ENCODE measurements at regions of chr3 and their contacts with region 1.

Region 1: DNA sequence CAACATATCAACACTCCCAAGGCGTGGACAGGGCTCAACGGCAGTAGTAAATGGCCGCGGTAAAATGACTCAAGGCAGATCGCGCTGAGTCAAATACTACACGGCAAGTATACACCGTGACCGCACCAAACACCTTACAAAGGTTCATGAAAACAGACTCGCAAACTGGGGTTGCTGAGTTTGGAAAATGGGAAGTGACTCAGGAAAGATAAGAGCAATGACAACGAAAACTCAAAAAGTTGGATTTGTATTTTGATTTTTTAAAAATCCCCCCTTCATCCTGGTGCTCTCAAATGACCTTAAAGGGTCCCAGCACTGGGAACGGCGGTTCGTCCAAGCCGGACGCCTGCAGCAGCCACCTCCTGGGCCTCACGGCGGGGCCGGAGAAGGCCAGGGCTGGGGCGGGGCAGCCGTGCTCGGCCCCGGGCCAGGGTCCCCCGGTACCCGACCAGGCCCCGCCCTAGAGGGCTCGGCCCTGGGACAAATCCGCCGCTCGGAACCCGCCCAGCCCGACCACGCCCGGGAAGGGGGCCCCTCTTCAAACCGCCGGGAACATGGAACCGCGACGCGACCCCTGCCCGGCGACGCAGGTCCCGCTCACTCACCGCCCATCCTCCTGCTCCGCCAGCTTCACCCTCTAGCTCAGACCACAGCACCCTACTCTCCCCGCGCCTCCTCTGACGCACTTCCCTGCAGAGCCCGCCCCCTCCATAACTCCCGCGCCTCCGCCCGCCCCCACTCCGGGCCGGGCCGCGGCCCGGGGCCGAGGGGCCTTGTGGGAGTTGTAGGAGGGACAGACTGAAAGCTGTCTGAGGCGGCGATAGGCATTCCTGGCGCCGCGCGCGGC is at the start of gene CLDND1:
- DNase-seq: peak; percentile 93 to 96 (median 94)
- H3K4me3 ChIP-seq: peak within 1 kb of the TSS; percentile 85 to 88
- H3K4me3 Mint-ChIP-seq: peak within 1 kb of the TSS; percentile 93 to 100 (median 98)
- H3K27ac ChIP-seq: peak within 1 kb of the TSS; percentile 97
- H3K27ac Mint-ChIP-seq: peak within 1 kb of the TSS; percentile 86 to 99 (median 97)
- H3K4me1 ChIP-seq: peaks cover 57% of the 10 kb centered on the region
- H3K4me1 Mint-ChIP-seq: peaks cover 39 to 68% (median 53%) of the 10 kb centered on the region in 4 donors
- H3K27me3 ChIP-seq: no peaks in the 10 kb centered on the region
- H3K27me3 Mint-ChIP-seq: no peaks in the 10 kb centered on the region
- total RNA-seq, gene CLDND1: 421 to 431 TPM

Region 2: GRCh38 chr3:98039322-98040024 is 483.0 kb before region 1 on chr3:
- CTCF ChIA-PET with region 1: no interaction called
- POLR2A ChIA-PET with region 1: no interaction called
- intact Hi-C with region 1: loop called (anchors 2 kb)
- DNase-seq: peak; percentile 84 to 90 (median 89)
- H3K4me3 ChIP-seq: peak overlapping the region; percentile 57 to 58
- H3K4me3 Mint-ChIP-seq: peak overlapping the region; percentile 85 to 96 (median 88)
- H3K27ac ChIP-seq: peak overlapping the region; percentile 68
- H3K27ac Mint-ChIP-seq: peak overlapping the region; percentile 82 to 98 (median 96)
- H3K4me1 ChIP-seq: no peaks in the 10 kb centered on the region
- H3K4me1 Mint-ChIP-seq: peaks cover 2 to 8% (median 5%) of the 10 kb centered on the region in 4 donors
- H3K27me3 ChIP-seq: peaks cover 3% of the 10 kb centered on the region
- H3K27me3 Mint-ChIP-seq: peaks cover 7 to 10% of the 10 kb centered on the region in 2 donors

Region 3: DNA sequence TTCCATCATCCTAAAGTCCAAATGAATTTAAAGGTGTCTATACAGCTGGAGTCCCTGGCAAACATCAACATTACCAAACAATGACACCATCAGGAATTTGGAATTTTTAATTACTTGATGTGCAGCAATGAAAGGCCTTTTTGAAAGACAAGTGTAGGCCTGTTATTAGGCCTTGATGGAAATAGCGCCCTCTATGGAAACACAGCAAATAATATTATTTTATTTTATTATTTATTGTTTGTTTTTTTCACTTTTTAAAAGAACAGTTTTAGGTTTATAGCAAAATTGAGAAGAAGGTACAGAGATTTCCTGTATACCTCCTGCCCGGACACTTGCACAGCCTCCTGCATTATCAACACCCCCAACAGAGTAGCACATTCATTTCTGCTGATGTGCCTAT is 453.6 kb before region 1 on chr3:
- CTCF ChIA-PET with region 1: no interaction called
- POLR2A ChIA-PET with region 1: no interaction called
- intact Hi-C with region 1: no loop called
- DNase-seq: no peak
- H3K4me3 ChIP-seq: no peak overlapping the region
- H3K4me3 Mint-ChIP-seq: no peak overlapping the region
- H3K27ac ChIP-seq: no peak overlapping the region
- H3K27ac Mint-ChIP-seq: no peak overlapping the region
- H3K4me1 ChIP-seq: no peaks in the 10 kb centered on the region
- H3K4me1 Mint-ChIP-seq: no peaks in the 10 kb centered on the region
- H3K27me3 ChIP-seq: no peaks in the 10 kb centered on the region
- H3K27me3 Mint-ChIP-seq: peaks cover 2 to 3% of the 10 kb centered on the region in 2 donors

Region 4: GRCh38 chr3:98497381-98497780 is 25.1 kb before region 1 on chr3 and contains the start of gene OR5K2:
- CTCF ChIA-PET with region 1: no interaction called
- POLR2A ChIA-PET with region 1: no interaction called
- intact Hi-C with region 1: no loop called
- DNase-seq: no peak
- H3K4me3 ChIP-seq: no peak within 1 kb of the TSS
- H3K4me3 Mint-ChIP-seq: no peak within 1 kb of the TSS
- H3K27ac ChIP-seq: no peak within 1 kb of the TSS
- H3K27ac Mint-ChIP-seq: no peak within 1 kb of the TSS
- H3K4me1 ChIP-seq: no peaks in the 10 kb centered on the region
- H3K4me1 Mint-ChIP-seq: peaks cover 0 to 4% (median under 1%) of the 10 kb centered on the region in 4 donors
- H3K27me3 ChIP-seq: no peaks in the 10 kb centered on the region
- H3K27me3 Mint-ChIP-seq: no peaks in the 10 kb centered on the region
- total RNA-seq, gene OR5K2: not detected

Region 5: GRCh38 chr3:98545940-98546339 is 23.5 kb after region 1 on chr3:
- CTCF ChIA-PET with region 1: interaction called, 4 read pairs
- POLR2A ChIA-PET with region 1: interaction called, 680 read pairs
- intact Hi-C with region 1: no loop called
- DNase-seq: peak in 1 of 5 donors; percentile 47
- H3K4me3 ChIP-seq: peak overlapping the region in 1 of 2 donors; percentile 22
- H3K4me3 Mint-ChIP-seq: peak overlapping the region in 7 of 8 donors; percentile 63 to 84 (median 78)
- H3K27ac ChIP-seq: no peak overlapping the region
- H3K27ac Mint-ChIP-seq: peak overlapping the region; percentile 25 to 85 (median 79)
- H3K4me1 ChIP-seq: peaks cover 31% of the 10 kb centered on the region
- H3K4me1 Mint-ChIP-seq: peaks cover 13 to 26% (median 18%) of the 10 kb centered on the region in 4 donors
- H3K27me3 ChIP-seq: no peaks in the 10 kb centered on the region
- H3K27me3 Mint-ChIP-seq: no peaks in the 10 kb centered on the region

Region 6: DNA sequence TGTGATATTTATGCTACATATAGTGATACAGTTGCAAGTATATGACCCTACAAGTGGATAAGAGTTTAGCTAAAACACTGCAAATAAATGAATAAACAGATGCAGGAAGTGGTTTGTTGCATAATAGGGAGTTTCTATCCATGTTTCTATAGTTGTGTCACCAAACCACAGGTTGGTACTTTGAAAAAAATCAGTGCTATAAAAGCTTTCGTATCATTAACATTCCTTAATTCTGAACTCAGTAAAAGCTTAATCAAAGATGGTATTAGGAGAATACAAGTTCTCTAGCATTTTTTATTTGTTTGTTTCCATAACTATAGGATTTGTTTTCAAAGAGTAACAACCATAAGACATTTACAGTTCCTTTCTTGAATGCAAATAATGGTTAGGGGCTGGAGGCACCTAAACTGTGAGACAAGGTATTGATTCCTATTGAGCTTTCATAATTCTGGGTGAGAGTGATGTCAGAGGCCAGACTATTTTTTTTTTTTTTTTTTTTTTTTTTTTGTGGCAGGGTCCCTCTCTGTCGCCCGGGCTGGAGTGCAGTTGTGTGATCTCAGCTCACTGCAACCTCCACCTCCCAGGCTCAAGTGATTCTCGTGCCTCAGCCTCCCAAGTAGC is 41.3 kb after region 1 on chr3:
- CTCF ChIA-PET with region 1: interaction called, 46 read pairs
- POLR2A ChIA-PET with region 1: interaction called, 680 read pairs
- intact Hi-C with region 1: loop called (anchors 1 kb)
- DNase-seq: peak; percentile 66 to 86 (median 80)
- H3K4me3 ChIP-seq: no peak overlapping the region
- H3K4me3 Mint-ChIP-seq: peak overlapping the region; percentile 45 to 87 (median 82)
- H3K27ac ChIP-seq: peak overlapping the region; percentile 92
- H3K27ac Mint-ChIP-seq: peak overlapping the region; percentile 91 to 99 (median 98)
- H3K4me1 ChIP-seq: peaks cover 86% of the 10 kb centered on the region
- H3K4me1 Mint-ChIP-seq: peaks cover 55 to 87% (median 75%) of the 10 kb centered on the region in 4 donors
- H3K27me3 ChIP-seq: no peaks in the 10 kb centered on the region
- H3K27me3 Mint-ChIP-seq: no peaks in the 10 kb centered on the region

Region 7: GRCh38 chr3:98593046-98593936 is 70.8 kb after region 1 on chr3 and contains the start of gene CPOX:
- CTCF ChIA-PET with region 1: interaction called, 26 read pairs
- POLR2A ChIA-PET with region 1: interaction called, 57 read pairs
- intact Hi-C with region 1: loop called (anchors 1 kb)
- DNase-seq: peak; percentile 74 to 87 (median 79)
- H3K4me3 ChIP-seq: peak within 1 kb of the TSS; percentile 43 to 92
- H3K4me3 Mint-ChIP-seq: peak within 1 kb of the TSS; percentile 93 to 100 (median 98)
- H3K27ac ChIP-seq: peak within 1 kb of the TSS; percentile 71
- H3K27ac Mint-ChIP-seq: peak within 1 kb of the TSS; percentile 74 to 99 (median 98)
- H3K4me1 ChIP-seq: peaks cover 32% of the 10 kb centered on the region
- H3K4me1 Mint-ChIP-seq: peaks cover 28 to 46% (median 37%) of the 10 kb centered on the region in 4 donors
- H3K27me3 ChIP-seq: no peaks in the 10 kb centered on the region
- H3K27me3 Mint-ChIP-seq: no peaks in the 10 kb centered on the region
- total RNA-seq, gene CPOX: 41.1 to 41.3 TPM

Region 8: DNA sequence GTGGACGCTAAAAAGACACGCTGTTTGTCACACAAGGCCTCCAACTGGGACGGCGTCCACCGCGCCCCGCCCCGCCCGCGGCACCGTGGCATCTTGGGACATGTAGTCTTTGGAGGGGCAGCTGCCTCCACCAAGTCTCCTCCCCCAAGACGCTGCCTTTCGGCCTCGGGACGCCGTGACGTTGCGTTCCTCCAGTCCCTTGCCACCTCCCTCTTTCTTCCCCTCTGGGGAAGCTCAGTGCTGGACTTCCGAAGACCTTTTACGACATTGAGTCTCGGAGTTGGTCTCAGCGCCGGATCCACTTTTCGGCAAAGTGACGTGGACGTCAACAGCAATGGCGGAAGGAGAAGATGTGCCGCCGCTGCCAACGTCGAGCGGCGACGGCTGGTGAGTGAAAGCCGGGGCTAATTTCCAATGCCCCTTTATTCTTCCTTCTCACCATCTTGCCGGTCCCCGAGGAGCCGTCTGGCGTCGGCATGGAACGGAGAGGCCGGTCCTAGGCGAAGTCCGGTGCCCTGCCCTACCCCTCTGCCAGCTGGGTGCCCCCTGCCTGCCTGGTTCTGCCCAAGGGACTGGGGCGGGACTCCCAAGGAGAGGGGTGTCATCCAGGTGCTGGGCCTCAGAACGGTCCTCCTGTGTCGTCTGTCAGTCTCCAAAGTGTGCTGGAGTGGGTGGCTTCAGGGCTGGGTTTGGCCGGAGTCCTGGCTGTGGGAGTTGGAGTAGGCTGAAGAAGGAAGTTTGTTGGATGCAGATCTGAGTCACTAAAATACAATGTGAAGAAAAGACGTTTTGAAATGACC is 1738.4 kb after region 1 on chr3 and contains the start of gene TBC1D23:
- CTCF ChIA-PET with region 1: no interaction called
- POLR2A ChIA-PET with region 1: interaction called, 3 read pairs
- intact Hi-C with region 1: loop called (anchors 5 kb)
- DNase-seq: peak; percentile 95 to 99 (median 98)
- H3K4me3 ChIP-seq: peak within 1 kb of the TSS; percentile 87 to 93
- H3K4me3 Mint-ChIP-seq: peak within 1 kb of the TSS; percentile 92 to 97 (median 94)
- H3K27ac ChIP-seq: peak within 1 kb of the TSS; percentile 93
- H3K27ac Mint-ChIP-seq: peak within 1 kb of the TSS; percentile 90 to 100 (median 99)
- H3K4me1 ChIP-seq: peaks cover 40% of the 10 kb centered on the region
- H3K4me1 Mint-ChIP-seq: peaks cover 40 to 63% (median 51%) of the 10 kb centered on the region in 4 donors
- H3K27me3 ChIP-seq: no peaks in the 10 kb centered on the region
- H3K27me3 Mint-ChIP-seq: no peaks in the 10 kb centered on the region
- total RNA-seq, gene TBC1D23: 43.3 to 44.9 TPM